Activated CD4-positive, alpha-beta T cell treated with anti-CD3 and anti-CD28 coated beads, Interleukin-2, amount 10 ng/mL, durations not matched to agents 24 days and 14 days (primary cell): ENCODE measurements at regions of chr10 and their contacts with region 1.

Region 1: GRCh38 chr10:62816331-62817120 is at the start of gene EGR2:
- DNase-seq: peak; percentile 98
- H3K4me3 Mint-ChIP-seq: peak within 1 kb of the TSS; percentile 97
- H3K27ac Mint-ChIP-seq: peak within 1 kb of the TSS; percentile 100
- H3K4me1 Mint-ChIP-seq: peaks cover 50% of the 10 kb centered on the region
- H3K27me3 Mint-ChIP-seq: peaks cover 30% of the 10 kb centered on the region
- total RNA-seq, gene EGR2: 178 and 201 TPM in 2 replicates

Region 2: GRCh38 chr10:61903221-61903927 is 913.2 kb before region 1 on chr10:
- intact Hi-C with region 1: loop called (anchors 5 kb)
- DNase-seq: peak; percentile 92
- H3K4me3 Mint-ChIP-seq: peak overlapping the region; percentile 92
- H3K27ac Mint-ChIP-seq: peak overlapping the region; percentile 95
- H3K4me1 Mint-ChIP-seq: peaks cover 36% of the 10 kb centered on the region
- H3K27me3 Mint-ChIP-seq: no peaks in the 10 kb centered on the region

Region 3: GRCh38 chr10:62437696-62438095 is 378.8 kb before region 1 on chr10:
- intact Hi-C with region 1: loop called (anchors 5 kb)
- DNase-seq: peak; percentile 79
- H3K4me3 Mint-ChIP-seq: no peak overlapping the region
- H3K27ac Mint-ChIP-seq: no peak overlapping the region
- H3K4me1 Mint-ChIP-seq: peaks cover 10% of the 10 kb centered on the region
- H3K27me3 Mint-ChIP-seq: peaks cover 30% of the 10 kb centered on the region

Region 4: GRCh38 chr10:62637249-62638061 is 179.1 kb before region 1 on chr10:
- intact Hi-C with region 1: loop called (anchors 1 kb)
- DNase-seq: peak; percentile 92
- H3K4me3 Mint-ChIP-seq: no peak overlapping the region
- H3K27ac Mint-ChIP-seq: no peak overlapping the region
- H3K4me1 Mint-ChIP-seq: peaks cover 22% of the 10 kb centered on the region
- H3K27me3 Mint-ChIP-seq: no peaks in the 10 kb centered on the region

Region 5: DNA sequence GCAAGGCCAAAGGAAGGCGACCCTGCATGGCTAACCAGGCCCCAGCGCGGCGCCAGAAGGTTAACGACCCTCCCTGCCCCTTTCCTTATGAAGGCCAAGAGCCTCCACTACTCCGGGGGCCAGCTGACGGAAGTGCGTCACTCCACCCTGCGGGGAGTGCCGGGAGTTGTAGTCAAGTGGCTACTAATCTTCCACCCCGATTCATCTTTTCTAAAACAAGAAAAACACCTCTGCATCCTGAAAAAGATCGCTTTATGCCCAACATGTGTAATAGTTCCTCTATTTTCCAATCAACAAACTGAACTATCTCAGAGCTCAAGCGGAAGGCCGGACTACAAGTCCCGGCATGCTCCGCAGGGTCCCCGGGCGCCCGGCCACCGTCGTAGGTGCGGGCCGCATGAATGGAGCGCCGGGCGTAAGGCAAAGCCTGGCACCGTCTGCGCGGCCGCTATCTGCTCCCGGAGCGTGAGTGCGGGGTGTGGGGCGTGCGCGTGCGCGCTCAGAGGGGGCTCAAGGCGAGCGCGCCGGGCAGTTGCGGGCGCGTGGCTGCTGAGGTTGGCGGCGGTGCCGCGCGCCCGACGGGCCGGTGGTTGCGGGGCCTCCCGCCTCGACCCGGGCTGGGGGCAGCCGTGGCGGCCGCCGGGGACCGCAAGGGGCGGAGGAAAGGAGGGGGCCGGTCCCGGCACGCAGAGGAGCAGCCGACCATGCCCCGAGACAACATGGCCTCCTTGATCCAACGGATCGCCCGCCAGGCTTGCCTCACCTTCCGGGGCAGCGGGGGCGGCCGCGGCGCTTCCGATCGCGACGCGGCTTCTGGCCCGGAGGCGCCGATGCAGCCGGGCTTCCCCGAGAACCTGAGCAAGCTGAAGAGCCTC is 11.9 kb before region 1 on chr10 and contains the start of gene ADO:
- intact Hi-C with region 1: loop called (anchors 1 kb)
- DNase-seq: peak; percentile 93
- H3K4me3 Mint-ChIP-seq: peak within 1 kb of the TSS; percentile 99
- H3K27ac Mint-ChIP-seq: peak within 1 kb of the TSS; percentile 100
- H3K4me1 Mint-ChIP-seq: peaks cover 33% of the 10 kb centered on the region
- H3K27me3 Mint-ChIP-seq: peaks cover 13% of the 10 kb centered on the region
- total RNA-seq, gene ADO: 43.6 and 43.8 TPM in 2 replicates

Region 6: GRCh38 chr10:62831346-62831745 is 14.8 kb after region 1 on chr10:
- intact Hi-C with region 1: no loop called
- DNase-seq: no peak
- H3K4me3 Mint-ChIP-seq: no peak overlapping the region
- H3K27ac Mint-ChIP-seq: no peak overlapping the region
- H3K4me1 Mint-ChIP-seq: peaks cover under 1% of the 10 kb centered on the region
- H3K27me3 Mint-ChIP-seq: peaks cover 13% of the 10 kb centered on the region

Region 7: GRCh38 chr10:62992145-62992721 is 175.7 kb after region 1 on chr10:
- intact Hi-C with region 1: loop called (anchors 1 kb)
- DNase-seq: no peak
- H3K4me3 Mint-ChIP-seq: peak overlapping the region; percentile 62
- H3K27ac Mint-ChIP-seq: peak overlapping the region; percentile 91
- H3K4me1 Mint-ChIP-seq: peaks cover 54% of the 10 kb centered on the region
- H3K27me3 Mint-ChIP-seq: no peaks in the 10 kb centered on the region

Region 8: DNA sequence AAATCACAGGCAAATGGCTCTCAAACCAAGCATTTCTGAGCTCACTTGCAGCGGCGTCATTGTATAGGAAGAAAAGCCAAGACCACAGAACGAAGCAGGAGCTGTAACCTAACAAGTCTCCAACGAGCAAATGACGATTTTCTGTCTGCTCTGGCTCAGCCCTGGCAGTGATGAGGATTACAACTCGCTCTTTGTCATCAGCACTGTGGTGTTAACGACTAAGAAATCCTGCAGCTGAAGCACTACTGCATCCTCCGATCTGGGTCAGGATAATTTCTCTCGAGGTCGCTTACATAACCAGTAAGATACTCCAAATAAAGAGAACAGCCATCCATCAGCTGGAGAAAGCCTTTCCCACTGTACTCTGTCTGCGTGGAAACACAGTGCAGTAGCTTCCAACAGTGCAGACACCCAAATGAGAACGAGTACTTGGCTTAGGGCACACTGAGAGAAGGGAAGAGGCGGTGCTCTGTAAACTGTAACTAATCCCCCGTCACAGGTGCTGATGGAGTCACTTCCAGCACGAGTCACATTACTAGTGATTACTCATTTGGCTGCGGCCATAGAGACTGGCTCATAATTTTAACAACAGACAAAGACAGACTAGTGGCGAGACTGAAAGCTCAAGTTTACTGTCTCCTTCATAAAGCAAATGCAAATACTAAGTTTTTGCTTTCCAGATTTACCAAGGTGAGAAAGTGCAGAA is 452.4 kb after region 1 on chr10:
- intact Hi-C with region 1: loop called (anchors 2 kb)
- DNase-seq: peak; percentile 95
- H3K4me3 Mint-ChIP-seq: peak overlapping the region; percentile 93
- H3K27ac Mint-ChIP-seq: peak overlapping the region; percentile 99
- H3K4me1 Mint-ChIP-seq: peaks cover 21% of the 10 kb centered on the region
- H3K27me3 Mint-ChIP-seq: no peaks in the 10 kb centered on the region